Activated naive CD4-positive, alpha-beta T cell treated with anti-CD3 and anti-CD28 coated beads for 36 hours (primary cell): ENCODE measurements at regions of chr13 and their contacts with region 1.

Region 1: DNA sequence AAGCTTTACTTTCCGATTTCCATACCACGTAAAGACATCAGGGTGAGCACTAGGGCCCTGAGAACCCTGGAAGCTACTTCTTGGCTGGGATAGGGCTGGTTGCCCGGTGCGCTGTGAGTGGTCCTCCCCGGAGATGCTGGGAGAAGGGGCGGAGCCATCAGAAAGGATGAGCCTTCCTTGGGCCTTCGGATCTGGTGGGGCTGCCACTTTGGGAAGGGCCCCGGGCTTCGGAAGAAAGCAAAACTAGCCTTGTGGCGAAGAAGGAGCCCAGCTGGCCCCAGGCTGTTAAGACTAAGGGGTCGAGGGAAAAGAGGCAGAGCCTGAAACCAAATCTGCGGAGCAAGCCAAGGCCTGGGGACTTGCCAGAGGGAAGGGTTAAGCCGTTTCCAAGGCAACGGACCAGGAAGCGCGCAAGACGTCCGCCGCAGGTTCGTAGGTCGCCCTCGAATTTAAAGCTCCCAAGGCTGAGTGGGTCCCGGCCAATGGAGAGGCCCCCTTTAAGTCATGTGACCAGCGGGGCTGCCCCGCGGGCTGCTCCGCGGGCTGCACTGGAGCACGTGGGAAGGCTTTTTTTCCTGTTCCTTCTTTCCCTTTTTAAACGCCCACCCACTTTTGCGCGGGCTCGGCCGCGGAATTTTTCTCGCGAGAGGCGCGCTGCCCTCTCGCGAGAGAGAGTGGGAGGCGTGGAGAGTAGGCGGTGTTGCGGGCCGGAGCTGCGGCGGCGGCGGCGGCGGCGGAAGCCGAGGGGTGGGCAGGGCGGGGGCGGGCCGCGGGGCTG is 426 bp upstream of the AKAP11 start:
- DNase-seq: peak; percentile 95
- H3K4me3 Mint-ChIP-seq: peak overlapping the region; percentile 94
- H3K27ac Mint-ChIP-seq: peak overlapping the region; percentile 88
- H3K4me1 Mint-ChIP-seq: peaks cover 46% of the 10 kb centered on the region
- H3K27me3 Mint-ChIP-seq: no peaks in the 10 kb centered on the region

Region 2: GRCh38 chr13:41960639-41961465 is 310.7 kb before region 1 on chr13 and contains the start of gene VWA8:
- CTCF ChIA-PET with region 1: no interaction called
- intact Hi-C with region 1: loop called (anchors 5 kb)
- DNase-seq: peak; percentile 84
- H3K4me3 Mint-ChIP-seq: peak within 1 kb of the TSS; percentile 95
- H3K27ac Mint-ChIP-seq: peak within 1 kb of the TSS; percentile 92
- H3K4me1 Mint-ChIP-seq: peaks cover 53% of the 10 kb centered on the region
- H3K27me3 Mint-ChIP-seq: no peaks in the 10 kb centered on the region
- total RNA-seq, gene VWA8: 21.2 to 21.5 TPM

Region 3: DNA sequence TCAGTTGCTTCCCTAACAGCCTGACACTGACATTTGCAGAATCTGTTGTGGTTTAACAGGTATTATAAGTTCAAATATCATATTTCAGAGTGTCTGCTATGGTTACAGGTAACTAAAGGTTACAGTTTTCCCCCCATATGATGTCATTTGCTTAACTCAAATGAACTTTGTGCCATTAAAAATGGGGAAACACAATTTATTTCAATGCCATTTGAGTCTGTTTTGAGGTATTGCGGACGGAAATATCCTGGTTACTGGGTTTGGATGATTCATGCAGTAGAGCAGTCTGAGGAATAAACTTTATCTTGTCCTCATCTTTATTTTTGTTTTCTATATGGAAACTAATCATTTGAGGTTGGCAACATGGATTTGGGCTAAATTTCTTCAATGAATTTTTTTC is 66.3 kb after region 1 on chr13:
- CTCF ChIA-PET with region 1: no interaction called
- intact Hi-C with region 1: no loop called
- DNase-seq: no peak
- H3K4me3 Mint-ChIP-seq: no peak overlapping the region
- H3K27ac Mint-ChIP-seq: no peak overlapping the region
- H3K4me1 Mint-ChIP-seq: peaks cover 11% of the 10 kb centered on the region
- H3K27me3 Mint-ChIP-seq: no peaks in the 10 kb centered on the region

Region 4: GRCh38 chr13:42354241-42355091 is 82.9 kb after region 1 on chr13:
- CTCF ChIA-PET with region 1: no interaction called
- intact Hi-C with region 1: loop called (anchors 1 kb)
- DNase-seq: peak; percentile 67
- H3K4me3 Mint-ChIP-seq: peak overlapping the region; percentile 70
- H3K27ac Mint-ChIP-seq: peak overlapping the region; percentile 99
- H3K4me1 Mint-ChIP-seq: peaks cover 68% of the 10 kb centered on the region
- H3K27me3 Mint-ChIP-seq: no peaks in the 10 kb centered on the region

Region 5: DNA sequence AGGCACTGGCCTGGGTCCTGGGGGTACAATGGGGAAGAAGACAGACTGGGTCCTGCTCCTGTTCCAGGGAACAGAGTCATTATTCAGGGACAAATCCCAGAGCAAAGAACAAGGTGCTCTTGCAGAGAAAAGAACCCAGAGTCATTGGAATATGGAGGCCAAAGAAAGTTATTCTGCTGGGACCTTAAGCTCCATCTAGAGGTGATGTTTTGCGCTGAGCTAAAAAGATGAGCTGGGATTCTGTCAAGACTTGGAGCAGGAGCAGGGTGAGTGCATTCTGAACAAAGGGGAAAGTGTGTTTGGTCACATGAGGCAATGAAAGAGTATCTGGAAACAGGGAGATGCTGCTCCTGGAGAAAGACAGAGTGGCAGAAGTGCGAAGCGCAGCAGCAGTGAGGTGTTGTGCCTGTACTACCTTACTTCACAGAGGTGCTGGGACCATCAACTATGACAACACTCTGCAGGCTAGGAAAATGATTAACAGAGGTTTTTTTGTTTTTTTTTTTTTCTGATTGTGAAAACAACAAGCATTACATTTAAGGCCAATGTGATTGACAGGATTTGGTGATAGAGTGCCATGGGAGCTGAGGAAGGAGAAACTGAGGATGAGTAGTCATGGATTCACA is 207.1 kb after region 1 on chr13:
- CTCF ChIA-PET with region 1: interaction called, 4 read pairs
- intact Hi-C with region 1: loop called (anchors 5 kb)
- DNase-seq: no peak
- H3K4me3 Mint-ChIP-seq: no peak overlapping the region
- H3K27ac Mint-ChIP-seq: no peak overlapping the region
- H3K4me1 Mint-ChIP-seq: peaks cover 17% of the 10 kb centered on the region
- H3K27me3 Mint-ChIP-seq: no peaks in the 10 kb centered on the region

Region 6: DNA sequence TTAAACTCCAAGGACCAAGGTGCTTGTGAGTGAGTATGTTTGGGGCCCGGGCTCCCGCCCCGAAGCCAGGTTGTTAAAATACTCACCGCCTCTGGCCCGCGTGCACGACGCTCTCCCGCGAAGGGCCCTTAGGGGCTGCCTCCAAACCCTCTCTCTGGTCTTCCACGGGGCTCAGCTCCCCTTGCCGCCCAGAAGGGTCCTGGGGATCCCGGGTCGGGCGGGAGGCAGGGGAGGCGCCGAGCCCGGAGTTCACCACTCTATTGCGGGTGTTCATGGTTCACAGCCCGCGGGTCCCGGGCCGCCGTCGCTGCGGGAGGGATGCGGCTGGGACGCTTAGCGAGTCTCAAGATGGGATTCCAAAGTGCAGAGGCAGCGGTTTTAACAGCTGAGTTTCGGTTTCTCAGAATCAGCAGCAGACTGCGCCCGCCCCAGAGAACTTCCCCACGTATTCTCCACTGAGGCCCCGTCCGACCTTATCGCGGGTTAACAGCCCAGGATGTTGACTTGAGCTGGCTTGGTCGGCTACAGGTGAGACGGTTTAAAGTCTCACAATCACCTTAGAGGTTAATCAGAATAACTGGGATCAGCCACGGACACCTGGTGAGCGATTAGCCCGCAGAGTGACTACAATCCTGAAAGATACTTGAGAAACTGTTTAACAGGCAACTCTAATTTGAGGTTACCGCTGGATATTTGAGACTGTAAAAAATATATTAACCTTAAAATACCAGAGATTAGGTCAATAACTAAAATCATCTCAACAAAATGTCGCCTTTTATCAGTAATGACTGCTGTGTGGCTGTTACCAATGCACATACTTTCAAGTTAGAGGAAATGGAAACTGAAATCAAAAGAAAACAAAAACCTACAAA is 720.6 kb after region 1 on chr13 and contains the start of gene EPSTI1:
- CTCF ChIA-PET with region 1: no interaction called
- intact Hi-C with region 1: loop called (anchors 5 kb)
- DNase-seq: peak; percentile 84
- H3K4me3 Mint-ChIP-seq: peak within 1 kb of the TSS; percentile 87
- H3K27ac Mint-ChIP-seq: peak within 1 kb of the TSS; percentile 98
- H3K4me1 Mint-ChIP-seq: peaks cover 52% of the 10 kb centered on the region
- H3K27me3 Mint-ChIP-seq: no peaks in the 10 kb centered on the region
- total RNA-seq, gene EPSTI1: 17.4 to 19.8 TPM